Naive thymus-derived CD4-positive, alpha-beta T cell (primary cell): ENCODE measurements at regions of chr5 and their contacts with region 1.

Region 1: DNA sequence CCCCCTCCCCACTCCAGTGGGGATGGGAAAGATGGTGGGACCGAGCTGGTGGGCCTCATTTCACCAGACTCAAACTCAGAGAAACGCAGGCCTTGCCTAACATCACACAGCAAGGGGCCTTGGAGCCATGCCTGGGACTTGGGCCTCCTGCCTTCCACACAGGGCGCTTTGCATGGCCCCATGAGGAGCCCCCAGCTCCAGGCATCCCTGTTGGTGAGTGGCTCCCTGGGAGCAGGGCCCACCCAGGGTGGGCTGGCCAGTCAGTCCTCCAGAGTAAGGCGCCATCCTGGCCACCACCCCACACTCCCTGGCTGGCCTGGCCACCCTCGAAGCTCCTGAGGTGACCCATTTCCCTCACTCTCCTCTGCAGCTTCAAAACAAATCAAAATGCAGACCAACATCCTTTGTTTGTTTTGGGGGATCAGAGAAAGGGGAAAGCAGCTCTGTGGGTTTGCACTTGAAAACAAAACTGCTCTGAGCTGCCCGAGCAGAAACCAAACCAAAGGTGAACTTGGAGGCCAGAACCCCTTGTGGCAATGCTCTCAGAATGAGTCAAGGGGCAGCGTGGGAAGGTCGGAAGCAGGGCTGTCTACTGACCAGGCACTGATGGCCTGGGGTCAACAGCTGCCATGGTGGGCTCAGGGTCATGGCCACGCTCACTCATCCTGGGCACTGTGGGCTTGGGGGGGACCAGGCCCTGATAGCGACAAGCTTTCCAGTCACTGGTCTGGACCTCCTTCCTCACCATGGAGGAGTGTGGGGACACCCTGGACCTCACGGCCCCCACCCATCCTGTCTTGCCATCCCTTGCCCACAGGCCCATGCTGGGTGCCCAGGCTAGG is 37.0 kb upstream of the VDAC1 start:
- DNase-seq: peak in 1 of 9 donors; percentile 11
- ATAC-seq: no peak
- H3K4me3 ChIP-seq: no peak overlapping the region
- H3K4me3 Mint-ChIP-seq: peak overlapping the region; percentile 16 to 81 (median 53)
- H3K27ac ChIP-seq: peak overlapping the region; percentile 24
- H3K27ac Mint-ChIP-seq: peak overlapping the region in 8 of 9 donors; percentile 22 to 91 (median 62)
- H3K4me1 ChIP-seq: peaks cover 11 to 59% of the 10 kb centered on the region in 2 donors
- H3K4me1 Mint-ChIP-seq: peaks cover 26 to 88% (median 68%) of the 10 kb centered on the region in 7 donors
- H3K27me3 ChIP-seq: no peaks in the 10 kb centered on the region
- H3K27me3 Mint-ChIP-seq: peaks cover 0 to 6% (median 0%) of the 10 kb centered on the region in 5 donors

Region 2: DNA sequence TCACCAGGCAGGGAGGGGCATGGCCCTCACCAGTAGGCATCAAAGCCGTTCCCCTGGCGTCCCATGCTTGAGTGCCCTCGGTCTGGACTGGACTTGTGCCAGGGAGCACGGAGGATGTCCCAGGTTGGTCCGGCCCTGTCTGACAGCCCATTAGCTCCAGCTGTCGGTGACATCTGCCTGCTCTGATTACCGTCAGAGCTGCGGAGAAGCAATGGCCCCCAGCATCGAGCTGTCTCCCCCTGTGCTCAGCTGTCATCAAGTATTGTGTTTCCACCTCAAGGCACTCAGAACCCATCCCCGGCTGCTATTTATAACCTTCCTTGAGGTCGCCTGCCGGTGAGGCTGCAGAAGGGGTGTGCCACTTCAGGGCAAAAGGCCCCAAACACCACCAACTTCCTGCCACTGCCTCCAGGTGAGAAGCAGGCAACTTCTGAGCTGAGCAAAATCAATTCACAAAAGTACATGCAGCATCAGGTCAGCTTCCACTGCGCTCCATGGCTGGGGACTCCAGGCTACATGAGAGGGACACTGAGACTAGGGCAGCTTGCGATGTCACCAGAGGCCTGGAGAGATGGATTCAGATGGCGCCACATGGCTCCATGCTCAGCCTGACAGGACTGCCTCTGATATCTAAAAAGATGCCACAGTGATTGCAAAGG is 216.0 kb before region 1 on chr5:
- CTCF ChIA-PET with region 1: no interaction called
- POLR2A ChIA-PET with region 1: no interaction called
- intact Hi-C with region 1: no loop called
- DNase-seq: peak in 7 of 9 donors; percentile 33 to 61 (median 54)
- ATAC-seq: peak; percentile 68
- H3K4me3 ChIP-seq: no peak overlapping the region
- H3K4me3 Mint-ChIP-seq: peak overlapping the region in 8 of 10 donors; percentile 36 to 81 (median 68)
- H3K27ac ChIP-seq: no peak overlapping the region
- H3K27ac Mint-ChIP-seq: peak overlapping the region; percentile 40 to 88 (median 72)
- H3K4me1 ChIP-seq: peaks cover 18 to 25% of the 10 kb centered on the region in 2 donors
- H3K4me1 Mint-ChIP-seq: peaks cover 16 to 53% (median 33%) of the 10 kb centered on the region in 7 donors
- H3K27me3 ChIP-seq: no peaks in the 10 kb centered on the region
- H3K27me3 Mint-ChIP-seq: peaks cover 0 to 7% (median 0%) of the 10 kb centered on the region in 5 donors

Region 3: DNA sequence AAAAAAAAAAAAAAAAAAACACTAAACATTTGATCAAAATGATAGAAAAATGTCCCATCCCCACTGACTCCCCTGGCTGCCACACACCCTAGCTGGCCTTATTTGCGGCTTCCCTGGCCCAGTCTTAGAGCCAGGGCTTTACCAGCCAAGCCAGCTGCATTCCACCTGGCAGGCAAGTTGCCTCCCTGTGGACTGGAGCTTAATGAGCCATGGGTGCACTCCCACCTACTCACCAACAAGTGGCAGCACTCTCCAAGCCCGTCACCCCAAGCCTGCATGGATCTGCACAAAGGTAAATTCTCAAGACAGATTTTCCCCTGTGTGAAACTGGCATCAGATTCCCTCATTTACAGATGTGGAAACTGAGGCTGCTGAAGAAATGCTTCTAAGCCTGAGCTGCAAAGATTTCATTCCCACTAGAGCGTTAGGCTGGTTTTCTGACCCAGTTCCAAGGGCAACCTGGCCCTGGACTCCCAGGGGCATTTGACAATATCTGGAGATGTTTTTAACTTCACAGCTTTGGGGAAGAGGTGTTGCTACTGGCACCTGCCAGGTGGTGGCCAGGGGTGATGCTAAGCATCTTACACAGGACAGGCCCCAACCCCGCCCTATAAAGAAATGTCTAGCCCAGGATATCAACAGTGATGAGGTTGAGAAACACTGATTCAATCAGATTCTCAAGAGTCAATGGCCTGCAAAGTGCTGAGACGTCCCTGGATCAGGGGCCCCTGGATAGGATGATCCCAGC is 15.1 kb before region 1 on chr5:
- CTCF ChIA-PET with region 1: interaction called, 17 read pairs
- POLR2A ChIA-PET with region 1: interaction called, 3 read pairs
- intact Hi-C with region 1: no loop called
- DNase-seq: peak in 8 of 9 donors; percentile 41 to 73 (median 62)
- ATAC-seq: peak; percentile 96
- H3K4me3 ChIP-seq: no peak overlapping the region
- H3K4me3 Mint-ChIP-seq: no peak overlapping the region
- H3K27ac ChIP-seq: no peak overlapping the region
- H3K27ac Mint-ChIP-seq: peak overlapping the region in 2 of 9 donors; percentile 36 to 52
- H3K4me1 ChIP-seq: no peaks in the 10 kb centered on the region
- H3K4me1 Mint-ChIP-seq: peaks cover 1 to 6% (median 4%) of the 10 kb centered on the region in 7 donors
- H3K27me3 ChIP-seq: no peaks in the 10 kb centered on the region
- H3K27me3 Mint-ChIP-seq: peaks cover 0 to 17% (median 0%) of the 10 kb centered on the region in 5 donors

Region 4: DNA sequence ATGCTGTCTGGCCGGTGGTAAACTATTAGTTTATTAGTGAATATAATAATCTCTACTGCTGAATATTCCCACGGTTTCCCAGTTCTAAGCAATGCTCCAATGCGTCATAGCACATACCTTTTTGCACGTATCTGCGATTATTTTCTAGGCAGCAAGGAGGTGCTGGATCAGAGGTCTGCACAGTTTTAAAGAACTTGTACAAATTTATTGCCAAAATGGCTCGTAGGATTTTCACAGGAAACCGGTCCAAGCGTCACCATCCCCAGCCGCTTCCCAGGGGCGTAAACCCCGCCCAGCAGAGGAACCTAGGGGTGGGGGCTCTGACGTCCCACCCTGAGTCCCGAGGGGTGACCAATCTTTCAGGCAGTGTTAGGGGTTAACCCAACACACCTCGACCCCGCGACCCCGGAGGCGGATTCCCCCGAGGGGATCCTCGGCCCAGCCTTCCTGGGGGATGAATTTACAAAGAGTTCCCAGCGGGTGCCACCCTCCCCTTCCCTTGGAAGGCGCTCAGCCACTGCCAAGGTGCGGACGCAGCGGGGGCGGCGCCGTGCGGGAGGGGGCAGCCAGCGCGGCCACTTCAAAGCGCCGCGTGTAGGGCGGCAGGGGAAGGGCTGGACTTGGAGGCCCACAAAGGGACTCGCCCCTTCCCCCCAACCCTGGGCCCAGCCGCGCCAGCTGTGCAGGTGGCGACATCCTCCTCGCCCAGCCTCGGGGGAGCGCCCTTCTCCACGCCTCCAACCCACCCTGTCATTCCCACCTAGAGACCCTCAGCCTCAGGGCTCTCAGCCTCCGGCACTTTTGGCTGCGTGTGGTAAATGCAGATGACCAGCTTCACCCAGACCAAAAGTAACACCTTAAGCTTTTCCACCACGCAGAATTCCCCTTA is 29.2 kb after region 1 on chr5:
- CTCF ChIA-PET with region 1: interaction called, 16 read pairs
- POLR2A ChIA-PET with region 1: interaction called, 31 read pairs
- intact Hi-C with region 1: no loop called
- DNase-seq: peak in 5 of 9 donors; percentile 27 to 61 (median 41)
- ATAC-seq: peak; percentile 50
- H3K4me3 ChIP-seq: peak overlapping the region; percentile 62
- H3K4me3 Mint-ChIP-seq: peak overlapping the region; percentile 74 to 95 (median 87)
- H3K27ac ChIP-seq: peak overlapping the region; percentile 72
- H3K27ac Mint-ChIP-seq: peak overlapping the region; percentile 79 to 99 (median 95)
- H3K4me1 ChIP-seq: peaks cover 18 to 75% of the 10 kb centered on the region in 2 donors
- H3K4me1 Mint-ChIP-seq: peaks cover 44 to 95% (median 78%) of the 10 kb centered on the region in 7 donors
- H3K27me3 ChIP-seq: no peaks in the 10 kb centered on the region
- H3K27me3 Mint-ChIP-seq: peaks cover 0 to 23% (median 0%) of the 10 kb centered on the region in 5 donors

Region 5: GRCh38 chr5:134092878-134093277 is 51.1 kb after region 1 on chr5:
- CTCF ChIA-PET with region 1: interaction called, 11 read pairs
- POLR2A ChIA-PET with region 1: interaction called, 31 read pairs
- intact Hi-C with region 1: no loop called
- DNase-seq: no peak
- ATAC-seq: no peak
- H3K4me3 ChIP-seq: no peak overlapping the region
- H3K4me3 Mint-ChIP-seq: peak overlapping the region in 9 of 10 donors; percentile 36 to 87 (median 72)
- H3K27ac ChIP-seq: peak overlapping the region; percentile 69
- H3K27ac Mint-ChIP-seq: peak overlapping the region in 8 of 9 donors; percentile 91 to 99 (median 96)
- H3K4me1 ChIP-seq: peaks cover 59 to 93% of the 10 kb centered on the region in 2 donors
- H3K4me1 Mint-ChIP-seq: peaks cover 54 to 97% (median 85%) of the 10 kb centered on the region in 7 donors
- H3K27me3 ChIP-seq: no peaks in the 10 kb centered on the region
- H3K27me3 Mint-ChIP-seq: peaks cover 0 to 36% (median 0%) of the 10 kb centered on the region in 5 donors

Region 6: GRCh38 chr5:134132372-134133034 is 90.7 kb after region 1 on chr5:
- CTCF ChIA-PET with region 1: interaction called, 365 read pairs
- POLR2A ChIA-PET with region 1: interaction called, 1,333 read pairs
- intact Hi-C with region 1: no loop called
- DNase-seq: peak; percentile 52 to 94 (median 87)
- ATAC-seq: peak; percentile 87
- H3K4me3 ChIP-seq: peak overlapping the region; percentile 86
- H3K4me3 Mint-ChIP-seq: peak overlapping the region; percentile 93 to 100 (median 98)
- H3K27ac ChIP-seq: peak overlapping the region; percentile 97
- H3K27ac Mint-ChIP-seq: peak overlapping the region; percentile 90 to 99 (median 98)
- H3K4me1 ChIP-seq: peaks cover 92 to 97% of the 10 kb centered on the region in 2 donors
- H3K4me1 Mint-ChIP-seq: peaks cover 57 to 100% (median 90%) of the 10 kb centered on the region in 7 donors
- H3K27me3 ChIP-seq: no peaks in the 10 kb centered on the region
- H3K27me3 Mint-ChIP-seq: peaks cover 0 to 2% (median 0%) of the 10 kb centered on the region in 5 donors

Region 7: DNA sequence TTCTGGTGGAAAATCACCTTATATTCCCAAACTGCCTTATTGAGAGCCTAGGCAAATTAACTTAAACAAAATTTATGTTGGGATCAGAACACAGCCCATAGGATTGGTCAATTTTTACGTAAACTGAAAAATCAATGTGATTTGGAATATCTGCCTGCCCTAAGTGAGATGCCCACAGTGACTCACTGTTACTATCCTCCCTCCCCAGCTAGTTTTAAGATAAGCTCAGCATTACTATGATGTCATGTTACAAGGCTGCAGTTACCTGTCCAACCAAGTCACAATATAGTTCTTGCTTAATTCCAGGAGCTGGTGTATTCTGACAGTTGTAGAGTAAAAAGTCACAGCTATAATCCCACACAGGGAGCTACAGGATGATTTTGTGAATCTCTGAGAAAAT is 111.9 kb after region 1 on chr5:
- CTCF ChIA-PET with region 1: interaction called, 365 read pairs
- POLR2A ChIA-PET with region 1: interaction called, 1,333 read pairs
- intact Hi-C with region 1: no loop called
- DNase-seq: peak in 1 of 9 donors; percentile 6
- ATAC-seq: no peak
- H3K4me3 ChIP-seq: no peak overlapping the region
- H3K4me3 Mint-ChIP-seq: peak overlapping the region in 5 of 10 donors; percentile 29 to 81 (median 51)
- H3K27ac ChIP-seq: no peak overlapping the region
- H3K27ac Mint-ChIP-seq: peak overlapping the region in 8 of 9 donors; percentile 55 to 91 (median 86)
- H3K4me1 ChIP-seq: peaks cover 5 to 56% of the 10 kb centered on the region in 2 donors
- H3K4me1 Mint-ChIP-seq: peaks cover 43 to 95% (median 90%) of the 10 kb centered on the region in 7 donors
- H3K27me3 ChIP-seq: no peaks in the 10 kb centered on the region
- H3K27me3 Mint-ChIP-seq: no peaks in the 10 kb centered on the region

Region 8: GRCh38 chr5:134289509-134290113 is 247.8 kb after region 1 on chr5:
- CTCF ChIA-PET with region 1: interaction called, 6 read pairs
- POLR2A ChIA-PET with region 1: interaction called, 3 read pairs
- intact Hi-C with region 1: loop called (anchors 1 to 5 kb)
- DNase-seq: peak in 7 of 9 donors; percentile 13 to 61 (median 50)
- ATAC-seq: peak; percentile 91
- H3K4me3 ChIP-seq: no peak overlapping the region
- H3K4me3 Mint-ChIP-seq: no peak overlapping the region
- H3K27ac ChIP-seq: no peak overlapping the region
- H3K27ac Mint-ChIP-seq: no peak overlapping the region
- H3K4me1 ChIP-seq: no peaks in the 10 kb centered on the region
- H3K4me1 Mint-ChIP-seq: peaks cover 0 to 6% (median 0%) of the 10 kb centered on the region in 7 donors
- H3K27me3 ChIP-seq: no peaks in the 10 kb centered on the region
- H3K27me3 Mint-ChIP-seq: peaks cover 0 to 39% (median 3%) of the 10 kb centered on the region in 5 donors